GM12878 (cell line): ENCODE measurements at regions of chrX and their contacts with region 1.

Region 1: DNA sequence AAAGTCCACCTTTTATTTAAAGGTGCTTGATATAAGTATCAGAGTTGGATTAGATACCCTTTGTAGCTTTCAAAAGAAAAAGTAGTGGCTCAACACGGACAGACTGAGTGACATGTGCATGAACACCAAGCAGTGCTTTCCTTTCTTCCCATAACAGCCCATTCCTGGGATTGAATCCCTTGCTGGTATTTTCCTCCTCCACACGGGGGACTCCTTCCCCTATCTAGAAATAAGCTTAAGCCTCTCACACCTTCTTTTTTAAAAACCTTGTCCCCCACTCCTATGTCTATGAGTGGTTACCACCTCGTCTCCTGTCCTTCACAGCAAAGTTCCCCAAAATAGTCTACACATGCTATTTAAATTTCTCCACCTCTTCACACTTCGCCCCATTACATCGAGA is 5.1 kb downstream of the AP1S2 start:
- DNase-seq: no peak
- ATAC-seq: no peak
- H3K4me3 ChIP-seq: no peak overlapping the region
- H3K27ac ChIP-seq: no peak overlapping the region
- H3K4me1 ChIP-seq: no peaks in the 10 kb centered on the region
- H3K27me3 ChIP-seq: no peaks in the 10 kb centered on the region
- CTCF ChIP-seq: peak in 2 of 3 experiments; percentile 32 to 34; a peak in 2 of 6 replicates
- EP300 ChIP-seq: no peak
- POLR2A ChIP-seq: no peak
- RAD21 ChIP-seq: peak; percentile 42

Region 2: GRCh38 chrX:15664487-15665444 is 184.8 kb before region 1 on chrX and contains the start of gene CLTRN:
- CTCF ChIA-PET with region 1: no interaction called
- POLR2A ChIA-PET with region 1: no interaction called
- RAD21 ChIA-PET with region 1: no interaction called
- SMC1A ChIA-PET with region 1: no interaction called
- in situ Hi-C with region 1: no loop called
- intact Hi-C with region 1: no loop called
- DNase-seq: no peak
- ATAC-seq: no peak
- H3K4me3 ChIP-seq: no peak within 1 kb of the TSS
- H3K27ac ChIP-seq: no peak within 1 kb of the TSS
- H3K4me1 ChIP-seq: no peaks in the 10 kb centered on the region
- H3K27me3 ChIP-seq: no peaks in the 10 kb centered on the region; a peak in 1 of 4 replicates
- CTCF ChIP-seq: no peak
- EP300 ChIP-seq: no peak
- POLR2A ChIP-seq: no peak
- RAD21 ChIP-seq: no peak
- polyA plus RNA-seq, gene CLTRN: 0.27 to 0.45 TPM

Region 3: GRCh38 chrX:15781961-15782699 is 67.4 kb before region 1 on chrX:
- CTCF ChIA-PET with region 1: interaction called, 3 read pairs
- POLR2A ChIA-PET with region 1: no interaction called
- RAD21 ChIA-PET with region 1: interaction called, 8 read pairs
- SMC1A ChIA-PET with region 1: interaction called, 12 read pairs
- in situ Hi-C with region 1: no loop called
- intact Hi-C with region 1: no loop called
- DNase-seq: peak; percentile 57
- ATAC-seq: peak; percentile 96
- H3K4me3 ChIP-seq: peak overlapping the region; percentile 72
- H3K27ac ChIP-seq: peak overlapping the region; percentile 94
- H3K4me1 ChIP-seq: peaks cover 11% of the 10 kb centered on the region
- H3K27me3 ChIP-seq: no peaks in the 10 kb centered on the region
- CTCF ChIP-seq: peak in 2 of 3 experiments; percentile 12 to 33; a peak in 2 of 6 replicates
- EP300 ChIP-seq: no peak
- POLR2A ChIP-seq: peak; percentile 40; the same call in 1 of the 2 replicates
- RAD21 ChIP-seq: peak; percentile 22; the same call in 1 of the 2 replicates

Region 4: DNA sequence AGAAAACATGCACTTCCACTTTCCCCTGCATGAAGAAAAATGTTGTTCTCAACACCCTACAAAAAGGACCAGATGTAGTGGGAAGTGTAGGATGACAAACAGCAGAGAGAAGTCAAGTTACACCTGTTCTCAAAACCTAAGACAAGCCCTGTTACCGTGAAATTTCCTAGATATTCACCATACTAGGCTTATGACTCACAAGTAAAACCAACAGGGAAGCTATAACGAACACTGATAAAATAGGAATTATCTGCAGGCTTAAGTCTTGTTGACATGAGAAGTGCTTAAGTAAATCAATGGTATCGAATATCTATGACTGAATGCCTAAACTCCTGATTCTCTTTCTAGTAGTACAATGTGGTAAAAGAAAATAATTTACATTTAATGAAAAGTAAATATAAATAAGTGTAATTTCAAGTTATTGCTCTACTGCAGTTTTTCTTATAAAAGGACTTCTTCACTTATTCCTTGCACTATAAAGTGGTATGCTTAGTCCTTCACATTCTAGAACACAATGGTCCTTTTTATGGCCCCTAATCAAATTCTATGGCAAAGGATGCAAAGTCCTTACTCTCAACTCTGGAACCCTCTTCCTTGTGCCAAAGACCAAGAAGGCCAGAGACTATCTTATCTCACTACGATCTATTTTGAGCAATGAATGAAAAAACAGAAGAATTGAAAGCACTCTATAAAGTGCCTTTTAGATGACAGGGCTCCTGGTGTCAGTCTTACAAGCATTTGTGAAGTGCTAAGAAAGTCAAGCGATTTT is 14.5 kb before region 1 on chrX:
- CTCF ChIA-PET with region 1: interaction called, 5 read pairs
- POLR2A ChIA-PET with region 1: interaction called, 4 read pairs
- RAD21 ChIA-PET with region 1: interaction called, 5 read pairs
- SMC1A ChIA-PET with region 1: interaction called, 12 read pairs
- in situ Hi-C with region 1: no loop called
- intact Hi-C with region 1: no loop called
- DNase-seq: no peak
- ATAC-seq: no peak
- H3K4me3 ChIP-seq: no peak overlapping the region
- H3K27ac ChIP-seq: no peak overlapping the region
- H3K4me1 ChIP-seq: no peaks in the 10 kb centered on the region
- H3K27me3 ChIP-seq: no peaks in the 10 kb centered on the region
- CTCF ChIP-seq: no peak
- EP300 ChIP-seq: no peak
- POLR2A ChIP-seq: no peak
- RAD21 ChIP-seq: no peak

Region 5: GRCh38 chrX:15930585-15930984 is 81.0 kb after region 1 on chrX:
- CTCF ChIA-PET with region 1: interaction called, 26 read pairs
- POLR2A ChIA-PET with region 1: no interaction called
- RAD21 ChIA-PET with region 1: interaction called, 11 read pairs
- SMC1A ChIA-PET with region 1: interaction called, 3 read pairs
- in situ Hi-C with region 1: no loop called
- intact Hi-C with region 1: no loop called
- DNase-seq: peak; percentile 13
- ATAC-seq: peak; percentile 71
- H3K4me3 ChIP-seq: no peak overlapping the region
- H3K27ac ChIP-seq: no peak overlapping the region
- H3K4me1 ChIP-seq: no peaks in the 10 kb centered on the region
- H3K27me3 ChIP-seq: no peaks in the 10 kb centered on the region
- CTCF ChIP-seq: peak; percentile 22 to 29 (median 27); a peak in 3 of 6 replicates
- EP300 ChIP-seq: no peak
- POLR2A ChIP-seq: no peak
- RAD21 ChIP-seq: peak; percentile 73

Region 6: DNA sequence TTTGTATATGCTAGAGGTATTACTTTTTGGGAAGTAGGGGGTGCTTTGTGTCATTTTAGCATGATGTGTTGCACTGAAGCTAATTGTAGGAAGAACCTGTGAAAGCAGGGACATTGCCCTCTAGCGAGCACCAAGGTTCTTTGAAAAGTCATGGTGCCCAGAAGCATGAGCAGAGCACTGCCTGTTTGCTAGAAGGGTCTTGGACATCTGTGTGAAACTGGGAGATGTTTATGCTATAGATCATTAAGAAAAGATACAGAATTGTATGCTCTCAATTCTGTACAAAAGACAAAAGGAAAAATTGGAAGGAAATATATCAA is 288.5 kb after region 1 on chrX:
- CTCF ChIA-PET with region 1: interaction called, 28 read pairs
- POLR2A ChIA-PET with region 1: interaction called, 3 read pairs
- RAD21 ChIA-PET with region 1: interaction called, 4 read pairs
- SMC1A ChIA-PET with region 1: interaction called, 15 read pairs
- in situ Hi-C with region 1: no loop called
- intact Hi-C with region 1: loop called (anchors 5 kb)
- DNase-seq: peak; percentile 16
- ATAC-seq: peak; percentile 82
- H3K4me3 ChIP-seq: no peak overlapping the region
- H3K27ac ChIP-seq: no peak overlapping the region
- H3K4me1 ChIP-seq: peaks cover 3% of the 10 kb centered on the region
- H3K27me3 ChIP-seq: peaks cover 0 to 2% of the 10 kb centered on the region in 2 experiments; a peak in 3 of 4 replicates
- CTCF ChIP-seq: peak; percentile 44 to 52 (median 51); a peak in 5 of 6 replicates
- EP300 ChIP-seq: no peak
- POLR2A ChIP-seq: no peak
- RAD21 ChIP-seq: peak; percentile 57

Region 7: DNA sequence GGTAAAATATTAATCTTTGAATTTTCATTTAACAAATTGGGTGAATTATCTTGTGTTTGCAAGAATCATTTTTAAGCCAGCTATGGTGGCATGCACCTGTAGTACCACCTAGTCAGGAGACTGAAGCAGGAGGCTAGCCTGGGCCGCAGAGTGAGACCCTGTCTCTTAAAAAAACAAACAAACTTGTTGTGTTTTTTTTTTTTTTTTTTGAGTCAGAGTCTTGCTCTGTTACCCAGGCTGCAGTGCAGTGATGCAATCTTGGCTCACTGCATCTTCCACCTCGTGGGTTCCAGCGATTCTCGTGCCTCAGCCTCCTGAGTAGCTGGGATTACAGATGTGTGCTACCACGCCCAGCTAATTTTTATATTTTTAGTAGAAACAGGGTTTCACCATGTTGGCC is 938.9 kb after region 1 on chrX:
- CTCF ChIA-PET with region 1: no interaction called
- POLR2A ChIA-PET with region 1: no interaction called
- RAD21 ChIA-PET with region 1: no interaction called
- SMC1A ChIA-PET with region 1: no interaction called
- in situ Hi-C with region 1: no loop called
- intact Hi-C with region 1: no loop called
- DNase-seq: no peak
- ATAC-seq: no peak
- H3K4me3 ChIP-seq: no peak overlapping the region
- H3K27ac ChIP-seq: no peak overlapping the region
- H3K4me1 ChIP-seq: no peaks in the 10 kb centered on the region
- H3K27me3 ChIP-seq: no peaks in the 10 kb centered on the region
- CTCF ChIP-seq: no peak
- EP300 ChIP-seq: no peak
- POLR2A ChIP-seq: no peak
- RAD21 ChIP-seq: no peak